CD4-positive, alpha-beta memory T cell (primary cell): ENCODE measurements at regions of chr7 and their contacts with region 1.

Region 1: GRCh38 chr7:130069978-130070860 is at the start of gene KLHDC10:
- DNase-seq: peak; percentile 96 to 98 (median 97)
- H3K4me3 ChIP-seq: peak within 1 kb of the TSS; percentile 63 to 89
- H3K4me3 Mint-ChIP-seq: peak within 1 kb of the TSS; percentile 88 to 97 (median 94)
- H3K27ac ChIP-seq: peak within 1 kb of the TSS; percentile 68
- H3K27ac Mint-ChIP-seq: peak within 1 kb of the TSS; percentile 91 to 99 (median 94)
- H3K4me1 ChIP-seq: peaks cover 48% of the 10 kb centered on the region
- H3K4me1 Mint-ChIP-seq: peaks cover 28 to 50% (median 41%) of the 10 kb centered on the region in 4 donors
- H3K27me3 ChIP-seq: no peaks in the 10 kb centered on the region
- H3K27me3 Mint-ChIP-seq: peaks cover 2% of the 10 kb centered on the region in 2 donors
- total RNA-seq, gene KLHDC10: 21.4 to 22.3 TPM

Region 2: GRCh38 chr7:129514683-129515082 is 555.5 kb before region 1 on chr7:
- CTCF ChIA-PET with region 1: no interaction called
- POLR2A ChIA-PET with region 1: no interaction called
- intact Hi-C with region 1: no loop called
- DNase-seq: no peak
- H3K4me3 ChIP-seq: no peak overlapping the region
- H3K4me3 Mint-ChIP-seq: no peak overlapping the region
- H3K27ac ChIP-seq: no peak overlapping the region
- H3K27ac Mint-ChIP-seq: no peak overlapping the region
- H3K4me1 ChIP-seq: no peaks in the 10 kb centered on the region
- H3K4me1 Mint-ChIP-seq: no peaks in the 10 kb centered on the region
- H3K27me3 ChIP-seq: no peaks in the 10 kb centered on the region
- H3K27me3 Mint-ChIP-seq: peaks cover 0 to 1% of the 10 kb centered on the region in 2 donors

Region 3: DNA sequence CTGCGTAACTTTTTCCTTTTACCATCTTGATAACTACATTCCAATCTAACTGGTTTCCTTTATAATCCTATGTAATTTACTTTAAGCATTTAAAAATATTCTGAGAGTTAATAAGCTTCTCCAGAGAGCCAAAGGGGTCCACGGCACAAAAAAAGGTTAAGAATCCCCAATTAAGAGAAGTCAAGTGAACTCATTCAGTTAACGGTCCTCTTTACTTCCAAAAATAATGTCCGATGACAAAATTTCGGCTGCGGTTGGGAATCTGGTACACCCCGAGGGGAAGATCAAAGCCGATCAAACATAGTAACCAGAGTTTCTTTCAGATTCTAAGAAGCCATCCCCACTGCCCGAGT is 19.5 kb before region 1 on chr7:
- CTCF ChIA-PET with region 1: interaction called, 4 read pairs
- POLR2A ChIA-PET with region 1: interaction called, 14 read pairs
- intact Hi-C with region 1: loop called (anchors 1 kb)
- DNase-seq: no peak
- H3K4me3 ChIP-seq: peak overlapping the region; percentile 81 to 88
- H3K4me3 Mint-ChIP-seq: peak overlapping the region; percentile 97 to 99 (median 98)
- H3K27ac ChIP-seq: peak overlapping the region; percentile 49
- H3K27ac Mint-ChIP-seq: peak overlapping the region; percentile 90 to 99 (median 97)
- H3K4me1 ChIP-seq: peaks cover 6% of the 10 kb centered on the region
- H3K4me1 Mint-ChIP-seq: peaks cover 7 to 18% (median 10%) of the 10 kb centered on the region in 4 donors
- H3K27me3 ChIP-seq: no peaks in the 10 kb centered on the region
- H3K27me3 Mint-ChIP-seq: peaks cover 2% of the 10 kb centered on the region in 2 donors

Region 4: GRCh38 chr7:130205084-130205947 is 135.1 kb after region 1 on chr7 and contains the start of gene TMEM209:
- CTCF ChIA-PET with region 1: interaction called, 9 read pairs
- POLR2A ChIA-PET with region 1: interaction called, 12 read pairs
- intact Hi-C with region 1: loop called (anchors 1 kb)
- DNase-seq: peak; percentile 94 to 95 (median 94)
- H3K4me3 ChIP-seq: peak within 1 kb of the TSS; percentile 82 to 91
- H3K4me3 Mint-ChIP-seq: peak within 1 kb of the TSS; percentile 98 to 100 (median 100)
- H3K27ac ChIP-seq: peak within 1 kb of the TSS; percentile 90
- H3K27ac Mint-ChIP-seq: peak within 1 kb of the TSS; percentile 93 to 100 (median 99)
- H3K4me1 ChIP-seq: peaks cover 14% of the 10 kb centered on the region
- H3K4me1 Mint-ChIP-seq: peaks cover 17 to 39% (median 27%) of the 10 kb centered on the region in 4 donors
- H3K27me3 ChIP-seq: no peaks in the 10 kb centered on the region
- H3K27me3 Mint-ChIP-seq: no peaks in the 10 kb centered on the region
- total RNA-seq, gene TMEM209: 34.5 to 38.0 TPM

Region 5: GRCh38 chr7:130668257-130669084 is 598.3 kb after region 1 on chr7 and contains the start of gene COPG2:
- CTCF ChIA-PET with region 1: no interaction called
- POLR2A ChIA-PET with region 1: no interaction called
- intact Hi-C with region 1: loop called (anchors 5 kb)
- DNase-seq: peak; percentile 45 to 76 (median 60)
- H3K4me3 ChIP-seq: peak within 1 kb of the TSS; percentile 75 to 82
- H3K4me3 Mint-ChIP-seq: peak within 1 kb of the TSS; percentile 90 to 93 (median 92)
- H3K27ac ChIP-seq: peak within 1 kb of the TSS; percentile 50
- H3K27ac Mint-ChIP-seq: peak within 1 kb of the TSS; percentile 73 to 91 (median 91)
- H3K4me1 ChIP-seq: peaks cover 16% of the 10 kb centered on the region
- H3K4me1 Mint-ChIP-seq: peaks cover 8 to 19% (median 15%) of the 10 kb centered on the region in 4 donors
- H3K27me3 ChIP-seq: no peaks in the 10 kb centered on the region
- H3K27me3 Mint-ChIP-seq: peaks cover 1 to 2% of the 10 kb centered on the region in 2 donors
- total RNA-seq, gene COPG2: 7.6 to 8.2 TPM

Region 6: DNA sequence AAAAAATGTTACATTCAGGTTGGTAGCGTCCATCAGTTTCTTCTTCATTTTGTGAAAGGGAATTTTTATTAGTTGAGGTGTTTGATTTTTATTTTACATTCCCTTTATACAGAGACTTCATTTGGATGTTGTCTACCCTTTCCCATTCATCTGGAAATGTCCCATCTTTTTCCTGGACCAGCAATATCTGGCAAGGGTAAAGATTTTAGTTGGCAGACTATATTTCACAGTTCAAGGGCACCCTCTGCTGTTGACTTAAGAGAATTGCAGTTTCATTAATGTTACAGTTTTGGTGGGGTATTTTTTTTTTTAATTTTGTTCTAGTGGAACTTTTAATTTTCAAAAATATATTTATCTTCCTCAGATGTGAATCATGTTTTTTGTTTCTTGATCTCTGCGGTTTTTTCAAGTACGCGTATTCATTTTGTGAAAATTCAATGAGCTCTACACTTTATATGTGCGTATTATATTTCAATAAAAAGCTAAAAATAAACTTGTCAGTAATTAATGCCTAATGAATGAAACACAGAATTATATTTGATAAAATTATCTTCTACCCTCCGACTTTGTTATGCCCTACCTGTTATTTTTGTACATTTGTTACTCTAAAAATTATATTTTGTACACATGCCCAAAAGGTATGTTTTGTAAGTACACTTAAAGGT is 761.7 kb after region 1 on chr7:
- CTCF ChIA-PET with region 1: interaction called, 15 read pairs
- POLR2A ChIA-PET with region 1: no interaction called
- intact Hi-C with region 1: loop called (anchors 1 kb)
- DNase-seq: peak in 4 of 5 donors; percentile 16 to 24 (median 18)
- H3K4me3 ChIP-seq: no peak overlapping the region
- H3K4me3 Mint-ChIP-seq: no peak overlapping the region
- H3K27ac ChIP-seq: no peak overlapping the region
- H3K27ac Mint-ChIP-seq: no peak overlapping the region
- H3K4me1 ChIP-seq: no peaks in the 10 kb centered on the region
- H3K4me1 Mint-ChIP-seq: no peaks in the 10 kb centered on the region
- H3K27me3 ChIP-seq: no peaks in the 10 kb centered on the region
- H3K27me3 Mint-ChIP-seq: peaks cover 5 to 12% of the 10 kb centered on the region in 2 donors